ENCODE measurements at regions of chr15 and their contacts with region 1.

Region 1: GRCh38 chr15:89367485-89368451 is 33.1 kb upstream of the POLG start:
- DNase-seq: no peak
- ATAC-seq: peak; percentile 28
- H3K4me3 Mint-ChIP-seq: peak overlapping the region; percentile 38
- H3K27ac Mint-ChIP-seq: no peak overlapping the region
- H3K4me1 Mint-ChIP-seq: peaks cover 21% of the 10 kb centered on the region
- H3K27me3 Mint-ChIP-seq: peaks cover 75% of the 10 kb centered on the region
- CTCF ChIP-seq: no peak

Region 2: GRCh38 chr15:89408372-89409183 is 40.8 kb after region 1 on chr15:
- CTCF ChIA-PET with region 1: no interaction called
- POLR2A ChIA-PET with region 1: interaction called, 6 read pairs
- intact Hi-C with region 1: loop called (anchors 2 kb)
- DNase-seq: no peak
- ATAC-seq: no peak
- H3K4me3 Mint-ChIP-seq: peak overlapping the region; percentile 88
- H3K27ac Mint-ChIP-seq: no peak overlapping the region
- H3K4me1 Mint-ChIP-seq: peaks cover 53% of the 10 kb centered on the region
- H3K27me3 Mint-ChIP-seq: peaks cover 81% of the 10 kb centered on the region
- CTCF ChIP-seq: no peak